ENCODE measurements at regions of chr7 and their contacts with region 1.

Region 1: GRCh38 chr7:48109848-48110663 is 21.0 kb downstream of the UPP1 start:
- DNase-seq: peak; percentile 86
- ATAC-seq: peak; percentile 72
- H3K4me3 ChIP-seq: no peak overlapping the region
- H3K27ac ChIP-seq: no peak overlapping the region
- H3K4me1 ChIP-seq: peaks cover 12% of the 10 kb centered on the region
- H3K27me3 ChIP-seq: no peaks in the 10 kb centered on the region
- CTCF ChIP-seq: peak; percentile 96

Region 2: DNA sequence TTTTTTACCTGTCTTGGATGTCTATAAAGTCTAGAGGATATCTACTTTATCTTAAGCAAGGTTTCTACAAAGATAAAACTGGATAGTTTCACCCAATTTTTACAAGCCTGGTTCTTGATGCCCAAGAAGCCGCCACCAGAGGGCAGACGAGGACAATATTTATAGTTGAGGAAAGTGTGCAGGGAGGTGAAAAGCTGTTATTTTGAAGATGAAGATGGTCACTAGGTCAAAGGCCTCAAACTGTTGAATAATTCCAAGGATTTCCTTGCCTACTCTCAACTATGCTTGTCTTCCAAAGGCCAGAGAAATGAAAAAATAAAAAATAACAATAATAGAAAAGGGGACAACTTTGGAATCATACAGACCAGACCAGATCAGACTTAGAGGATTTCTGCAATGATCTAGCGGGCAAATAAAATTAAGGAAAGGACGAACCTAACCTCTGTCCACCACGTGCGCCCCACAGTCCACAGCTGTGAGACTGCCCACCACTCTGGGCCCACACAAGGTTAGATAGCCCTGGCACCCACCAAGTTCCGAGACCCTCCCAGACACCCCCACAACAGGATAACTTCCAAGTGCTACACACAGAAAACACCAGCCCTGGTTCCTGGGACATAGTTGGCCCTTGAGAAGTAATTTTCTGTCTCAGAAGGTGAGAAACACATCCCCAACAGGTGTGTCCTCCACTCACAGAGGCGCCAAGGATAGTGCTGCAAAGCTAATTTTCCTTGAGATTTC is 164.6 kb before region 1 on chr7:
- CTCF ChIA-PET with region 1: interaction called, 14 read pairs
- POLR2A ChIA-PET with region 1: interaction called, 3 read pairs
- intact Hi-C with region 1: loop called (anchors 1 kb)
- DNase-seq: peak; percentile 77
- ATAC-seq: peak; percentile 52
- H3K4me3 ChIP-seq: no peak overlapping the region
- H3K27ac ChIP-seq: no peak overlapping the region
- H3K4me1 ChIP-seq: peaks cover 19% of the 10 kb centered on the region
- H3K27me3 ChIP-seq: no peaks in the 10 kb centered on the region
- CTCF ChIP-seq: peak; percentile 91

Region 3: DNA sequence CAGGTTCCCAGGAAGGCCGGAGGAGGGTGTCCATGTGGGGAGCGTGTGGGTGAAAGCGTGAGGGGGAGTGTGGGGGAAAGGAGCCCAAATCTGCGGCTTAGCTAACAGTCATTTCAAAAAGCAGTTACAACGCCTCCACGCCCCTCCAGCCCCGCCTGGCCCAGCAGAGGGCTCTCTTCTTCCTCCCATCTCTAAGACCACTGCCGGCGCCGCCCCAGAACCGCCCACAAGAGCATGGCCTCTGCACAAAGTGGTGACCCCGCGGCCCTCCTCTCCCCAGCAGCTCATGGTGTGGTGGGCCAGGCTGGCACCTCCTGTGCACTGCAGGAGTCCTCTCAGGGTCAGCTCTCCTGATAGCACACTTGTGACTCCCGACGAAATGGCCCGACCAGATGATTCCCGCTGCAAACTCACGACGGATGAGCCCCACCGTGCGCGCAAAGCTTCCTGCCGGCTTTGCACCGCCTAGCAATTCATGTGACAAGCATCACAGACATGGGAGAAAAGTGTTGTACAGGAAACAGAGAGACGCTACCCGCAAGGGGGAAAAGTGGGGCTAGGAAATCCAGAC is 118.2 kb before region 1 on chr7:
- CTCF ChIA-PET with region 1: no interaction called
- POLR2A ChIA-PET with region 1: no interaction called
- intact Hi-C with region 1: loop called (anchors 1 kb)
- DNase-seq: peak; percentile 32
- ATAC-seq: peak; percentile 79; the same call in 1 of the 2 replicates
- H3K4me3 ChIP-seq: no peak overlapping the region
- H3K27ac ChIP-seq: no peak overlapping the region
- H3K4me1 ChIP-seq: no peaks in the 10 kb centered on the region
- H3K27me3 ChIP-seq: no peaks in the 10 kb centered on the region
- CTCF ChIP-seq: peak; percentile 49; the same call in 1 of the 2 replicates

Region 4: GRCh38 chr7:48154792-48155413 is 44.8 kb after region 1 on chr7:
- CTCF ChIA-PET with region 1: interaction called, 3 read pairs
- POLR2A ChIA-PET with region 1: no interaction called
- intact Hi-C with region 1: loop called (anchors 1 kb)
- DNase-seq: peak; percentile 62
- ATAC-seq: peak; percentile 94
- H3K4me3 ChIP-seq: no peak overlapping the region
- H3K27ac ChIP-seq: no peak overlapping the region
- H3K4me1 ChIP-seq: 0 out of 2 replicates have a peak, but pooled peaks cover 9% of the 10 kb centered on the region
- H3K27me3 ChIP-seq: no peaks in the 10 kb centered on the region
- CTCF ChIP-seq: peak; percentile 83